Activated CD8-positive, alpha-beta memory T cell treated with anti-CD3 and anti-CD28 coated beads, Interleukin-2, amount 10 ng/mL, durations not matched to agents 7 days and 5 days (primary cell): ENCODE measurements at regions of chr20 and their contacts with region 1.

Region 1: GRCh38 chr20:31661625-31662371 is 24.1 kb downstream of the COX4I2 start:
- DNase-seq: peak; percentile 82
- ATAC-seq: peak; percentile 86
- H3K4me3 Mint-ChIP-seq: peak overlapping the region; percentile 50
- H3K27ac Mint-ChIP-seq: peak overlapping the region; percentile 84
- H3K4me1 Mint-ChIP-seq: peaks cover 43% of the 10 kb centered on the region
- H3K27me3 Mint-ChIP-seq: no peaks in the 10 kb centered on the region

Region 2: GRCh38 chr20:31535298-31535697 is 126.5 kb before region 1 on chr20:
- CTCF ChIA-PET with region 1: no interaction called
- DNase-seq: no peak
- ATAC-seq: no peak
- H3K4me3 Mint-ChIP-seq: no peak overlapping the region
- H3K27ac Mint-ChIP-seq: no peak overlapping the region
- H3K4me1 Mint-ChIP-seq: peaks cover 42% of the 10 kb centered on the region
- H3K27me3 Mint-ChIP-seq: no peaks in the 10 kb centered on the region

Region 3: GRCh38 chr20:31572701-31573554 is 88.9 kb before region 1 on chr20:
- CTCF ChIA-PET with region 1: interaction called, 10 read pairs
- DNase-seq: peak; percentile 91
- ATAC-seq: peak; percentile 94
- H3K4me3 Mint-ChIP-seq: peak overlapping the region; percentile 80
- H3K27ac Mint-ChIP-seq: peak overlapping the region; percentile 81
- H3K4me1 Mint-ChIP-seq: peaks cover 19% of the 10 kb centered on the region
- H3K27me3 Mint-ChIP-seq: peaks cover 12% of the 10 kb centered on the region

Region 4: DNA sequence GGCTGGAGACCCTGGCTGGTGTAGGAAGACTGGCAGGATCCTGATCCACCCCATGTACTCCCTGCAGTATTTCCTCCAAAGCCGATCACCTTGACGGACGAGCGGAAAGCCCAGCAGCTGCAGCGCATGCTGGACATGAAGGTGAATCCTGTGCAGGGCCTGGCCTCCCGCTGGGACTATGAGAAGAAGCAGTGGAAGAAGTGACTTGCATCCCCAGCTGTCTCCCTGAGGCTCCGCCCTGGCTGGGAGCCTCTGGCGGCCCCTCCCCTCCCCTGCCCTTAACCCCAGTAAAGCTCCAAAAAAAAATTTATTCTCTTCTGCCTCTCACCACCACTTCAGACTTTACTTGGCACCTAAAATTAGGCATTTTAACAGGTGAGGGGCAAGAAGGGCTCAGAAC is 17.1 kb before region 1 on chr20:
- CTCF ChIA-PET with region 1: interaction called, 13 read pairs
- DNase-seq: no peak
- ATAC-seq: no peak
- H3K4me3 Mint-ChIP-seq: no peak overlapping the region
- H3K27ac Mint-ChIP-seq: no peak overlapping the region
- H3K4me1 Mint-ChIP-seq: peaks cover 21% of the 10 kb centered on the region
- H3K27me3 Mint-ChIP-seq: peaks cover 72% of the 10 kb centered on the region

Region 5: GRCh38 chr20:31684153-31685015 is 22.6 kb after region 1 on chr20:
- CTCF ChIA-PET with region 1: interaction called, 31 read pairs
- DNase-seq: no peak
- ATAC-seq: peak; percentile 20
- H3K4me3 Mint-ChIP-seq: no peak overlapping the region
- H3K27ac Mint-ChIP-seq: peak overlapping the region; percentile 71
- H3K4me1 Mint-ChIP-seq: peaks cover 74% of the 10 kb centered on the region
- H3K27me3 Mint-ChIP-seq: no peaks in the 10 kb centered on the region

Region 6: DNA sequence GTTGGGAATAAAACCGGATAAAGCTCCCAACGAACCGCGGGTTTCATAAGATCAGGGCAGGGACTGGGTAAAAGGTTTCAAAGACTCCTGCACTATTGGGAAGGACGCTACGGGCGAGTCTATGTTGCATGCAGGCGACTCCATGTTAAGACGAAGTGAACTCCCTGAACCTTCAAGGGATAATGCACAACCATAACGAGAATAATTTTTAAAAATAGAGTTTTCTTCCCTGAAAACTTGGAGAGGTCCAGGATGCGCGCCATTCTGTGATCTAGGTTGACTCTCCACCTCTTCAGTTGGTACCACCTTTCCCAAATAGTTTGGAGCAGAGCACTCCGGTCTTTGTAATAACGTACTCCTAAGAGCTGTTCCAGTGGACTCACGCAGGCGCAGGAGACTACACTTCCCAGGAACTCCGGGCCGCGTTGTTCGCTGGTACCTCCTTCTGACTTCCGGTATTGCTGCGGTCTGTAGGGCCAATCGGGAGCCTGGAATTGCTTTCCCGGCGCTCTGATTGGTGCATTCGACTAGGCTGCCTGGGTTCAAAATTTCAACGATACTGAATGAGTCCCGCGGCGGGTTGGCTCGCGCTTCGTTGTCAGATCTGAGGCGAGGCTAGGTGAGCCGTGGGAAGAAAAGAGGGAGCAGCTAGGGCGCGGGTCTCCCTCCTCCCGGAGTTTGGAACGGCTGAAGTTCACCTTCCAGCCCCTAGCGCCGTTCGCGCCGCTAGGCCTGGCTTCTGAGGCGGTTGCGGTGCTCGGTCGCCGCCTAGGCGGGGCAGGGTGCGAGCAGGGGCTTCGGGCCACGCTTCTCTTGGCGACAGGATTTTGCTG is 77.1 kb after region 1 on chr20 and contains the start of gene TPX2:
- CTCF ChIA-PET with region 1: interaction called, 22 read pairs
- DNase-seq: peak; percentile 91
- ATAC-seq: peak; percentile 93
- H3K4me3 Mint-ChIP-seq: no peak within 1 kb of the TSS
- H3K27ac Mint-ChIP-seq: no peak within 1 kb of the TSS
- H3K4me1 Mint-ChIP-seq: peaks cover 10% of the 10 kb centered on the region
- H3K27me3 Mint-ChIP-seq: peaks cover 5% of the 10 kb centered on the region
- total RNA-seq, gene TPX2: 148 to 159 TPM